K562 (cell line): ENCODE measurements at regions of chr1 and their contacts with region 1.

Region 1: DNA sequence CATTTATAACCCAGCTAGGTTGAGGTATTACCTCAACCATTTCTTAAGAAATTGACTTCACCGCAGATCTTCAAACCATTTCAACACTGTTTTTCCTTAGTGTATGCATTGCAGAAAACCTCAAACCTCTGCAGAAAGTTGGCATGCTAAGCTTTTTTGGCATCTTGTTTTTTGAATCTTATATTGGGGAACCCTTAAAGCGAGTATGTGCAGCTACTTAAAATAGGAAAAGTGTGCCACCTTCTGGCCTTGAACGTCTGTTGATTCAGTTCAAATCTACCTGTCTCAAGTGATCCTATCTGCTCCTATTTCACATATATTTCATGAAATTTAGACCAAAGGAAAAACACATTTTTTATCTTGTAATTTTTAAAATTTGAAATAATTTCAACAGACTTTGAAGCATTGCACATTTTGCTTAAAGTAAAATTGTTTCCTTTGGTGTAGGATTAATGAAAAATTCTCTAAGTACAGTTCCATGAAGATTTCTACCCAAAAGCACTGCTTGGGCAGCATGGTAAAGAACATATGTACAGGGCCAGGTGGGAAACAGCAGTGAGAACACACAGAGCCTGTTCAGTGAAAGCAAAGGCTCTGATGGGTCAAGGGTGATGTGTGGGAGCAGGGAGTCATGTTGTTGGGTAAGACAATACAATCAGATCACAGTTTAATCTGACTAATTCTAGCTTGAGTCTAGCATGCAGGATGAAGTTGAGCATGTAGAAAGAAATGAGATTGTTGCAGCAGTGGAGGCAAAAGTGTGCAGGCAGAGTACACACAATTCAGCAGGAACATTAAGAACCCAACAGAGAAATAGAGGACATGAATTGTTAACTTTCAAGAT is 17.2 kb downstream of the HENMT1 start:
- DNase-seq: peak; percentile 31 to 80 (median 46)
- ATAC-seq: peak; percentile 85
- H3K4me3 ChIP-seq: no peak overlapping the region
- H3K27ac ChIP-seq: no peak overlapping the region
- H3K4me1 ChIP-seq: peaks cover 0 to 8% of the 10 kb centered on the region in 2 experiments; a peak in 3 of 5 replicates
- H3K27me3 ChIP-seq: no peaks in the 10 kb centered on the region; a peak in 1 of 5 replicates
- CTCF ChIP-seq: peak; percentile 58 to 91 (median 70); a peak in 5 of 6 replicates
- EP300 ChIP-seq: no peak
- POLR2A ChIP-seq: no peak
- RAD21 ChIP-seq: peak; percentile 94 to 97

Region 2: DNA sequence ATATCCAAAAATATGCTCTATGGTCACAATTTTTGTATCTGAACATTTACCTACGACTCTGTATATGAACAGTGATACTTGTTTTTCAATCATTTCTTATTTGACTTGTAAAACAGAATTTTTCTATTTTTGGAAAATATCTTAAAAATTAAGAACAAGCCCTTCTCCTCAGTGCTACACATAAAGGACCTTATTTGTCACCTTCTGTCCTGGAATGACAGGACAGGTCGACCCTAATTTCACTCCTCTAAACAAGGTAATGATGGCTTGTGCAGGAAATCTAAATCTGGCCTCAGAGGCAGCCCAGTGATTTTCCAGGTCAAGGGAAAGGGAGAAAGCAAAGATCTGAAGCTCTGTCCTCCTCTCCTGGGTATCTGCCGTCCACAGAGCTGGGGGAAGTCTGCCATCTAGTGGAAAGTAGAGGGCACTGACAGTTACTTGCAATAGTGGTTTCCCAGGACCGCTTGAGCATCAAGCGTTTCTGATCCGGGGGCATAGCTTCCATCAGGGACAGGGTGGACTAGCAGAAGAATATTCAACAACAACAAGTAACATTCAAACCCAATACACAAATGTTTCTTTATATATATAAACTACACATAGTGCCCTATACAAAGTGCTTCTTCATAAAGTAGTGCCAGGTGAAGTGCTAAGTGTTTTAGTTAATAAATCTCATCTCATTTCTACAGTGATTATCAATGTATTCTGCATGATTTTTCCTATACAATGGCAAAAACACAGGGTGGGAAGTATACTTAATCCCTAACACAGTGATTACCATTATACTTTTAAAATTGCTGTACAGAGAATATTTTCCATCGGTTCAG is 518.2 kb before region 1 on chr1:
- CTCF ChIA-PET with region 1: no interaction called
- POLR2A ChIA-PET with region 1: no interaction called
- in situ Hi-C with region 1: no loop called
- intact Hi-C with region 1: loop called (anchors 10 kb)
- DNase-seq: peak; percentile 77 to 86 (median 82)
- ATAC-seq: peak; percentile 93
- H3K4me3 ChIP-seq: no peak overlapping the region
- H3K27ac ChIP-seq: no peak overlapping the region
- H3K4me1 ChIP-seq: peaks cover 0 to 6% of the 10 kb centered on the region in 2 experiments; a peak in 2 of 5 replicates
- H3K27me3 ChIP-seq: peaks cover 12 to 24% of the 10 kb centered on the region in 2 experiments
- CTCF ChIP-seq: peak; percentile 94 to 96 (median 94)
- EP300 ChIP-seq: no peak
- POLR2A ChIP-seq: no peak
- RAD21 ChIP-seq: peak; percentile 99

Region 3: GRCh38 chr1:108512239-108512981 is 131.3 kb before region 1 on chr1:
- CTCF ChIA-PET with region 1: interaction called, 65 read pairs
- POLR2A ChIA-PET with region 1: no interaction called
- in situ Hi-C with region 1: loop called (anchors 5 kb)
- intact Hi-C with region 1: loop called (anchors 1 kb)
- DNase-seq: peak; percentile 31 to 68 (median 48)
- ATAC-seq: peak; percentile 87
- H3K4me3 ChIP-seq: no peak overlapping the region
- H3K27ac ChIP-seq: no peak overlapping the region
- H3K4me1 ChIP-seq: no peaks in the 10 kb centered on the region
- H3K27me3 ChIP-seq: no peaks in the 10 kb centered on the region
- CTCF ChIP-seq: peak; percentile 77 to 99 (median 81)
- EP300 ChIP-seq: no peak
- POLR2A ChIP-seq: no peak
- RAD21 ChIP-seq: peak; percentile 100

Region 4: DNA sequence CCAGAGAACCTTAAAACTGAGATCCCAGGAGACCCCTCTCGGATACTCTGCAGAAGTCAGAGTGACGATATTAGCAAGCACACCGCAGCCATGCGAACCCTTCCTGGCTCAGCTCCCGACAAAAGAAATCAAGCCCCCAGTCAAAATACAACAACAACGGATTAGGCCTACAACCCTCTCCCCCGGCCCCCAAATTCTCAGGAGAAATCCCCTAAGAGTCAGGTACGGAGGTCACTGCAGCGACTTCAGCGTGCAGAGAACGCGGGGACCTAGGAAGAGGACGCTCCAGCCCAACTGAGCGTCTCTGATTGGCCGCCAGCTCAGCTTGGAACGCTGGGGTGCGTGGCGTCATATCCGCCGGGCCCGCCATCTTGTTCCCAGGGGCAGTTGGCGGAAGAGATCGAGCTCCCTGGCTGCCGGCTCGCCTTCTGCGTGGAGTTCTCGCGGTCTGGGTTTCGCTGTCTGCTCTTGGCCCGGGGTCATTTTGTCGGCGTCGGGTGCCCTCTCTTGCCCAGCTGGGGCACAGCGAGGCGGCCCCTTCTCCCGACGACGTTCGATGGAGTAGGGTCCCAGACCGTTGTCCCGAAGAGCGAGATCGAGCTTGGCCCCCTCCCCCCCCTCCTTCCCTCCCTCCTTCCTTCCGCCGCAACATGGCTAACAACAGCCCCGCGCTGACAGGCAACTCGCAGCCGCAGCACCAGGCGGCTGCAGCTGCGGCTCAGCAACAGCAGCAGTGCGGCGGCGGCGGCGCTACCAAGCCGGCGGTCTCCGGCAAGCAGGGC is 48.4 kb after region 1 on chr1 and contains the start of gene PRPF38B:
- CTCF ChIA-PET with region 1: no interaction called
- POLR2A ChIA-PET with region 1: interaction called, 9 read pairs
- in situ Hi-C with region 1: no loop called
- intact Hi-C with region 1: loop called (anchors 2 kb)
- DNase-seq: peak; percentile 96 to 99 (median 98)
- ATAC-seq: peak; percentile 91
- H3K4me3 ChIP-seq: peak within 1 kb of the TSS; percentile 74
- H3K27ac ChIP-seq: peak within 1 kb of the TSS; percentile 94
- H3K4me1 ChIP-seq: peaks cover 5 to 7% of the 10 kb centered on the region in 2 experiments; a peak in 3 of 5 replicates
- H3K27me3 ChIP-seq: no peaks in the 10 kb centered on the region
- CTCF ChIP-seq: no peak
- EP300 ChIP-seq: 0 out of 2 replicates have a peak, but pooled peaks have one; percentile 10
- POLR2A ChIP-seq: peak; percentile 99
- RAD21 ChIP-seq: no peak
- polyA plus RNA-seq, gene PRPF38B: 25.3 to 34.3 TPM

Region 5: GRCh38 chr1:108722292-108722691 is 78.6 kb after region 1 on chr1:
- CTCF ChIA-PET with region 1: no interaction called
- POLR2A ChIA-PET with region 1: no interaction called
- in situ Hi-C with region 1: no loop called
- intact Hi-C with region 1: no loop called
- DNase-seq: no peak
- ATAC-seq: no peak; the same call in 2 of the 3 replicates
- H3K4me3 ChIP-seq: no peak overlapping the region
- H3K27ac ChIP-seq: no peak overlapping the region
- H3K4me1 ChIP-seq: peaks cover 0 to 10% of the 10 kb centered on the region in 2 experiments; a peak in 3 of 5 replicates
- H3K27me3 ChIP-seq: peaks cover 14 to 15% of the 10 kb centered on the region in 2 experiments; a peak in 4 of 5 replicates
- CTCF ChIP-seq: no peak
- EP300 ChIP-seq: no peak
- POLR2A ChIP-seq: no peak
- RAD21 ChIP-seq: no peak

Region 6: GRCh38 chr1:108816049-108816893 is 172.6 kb after region 1 on chr1:
- CTCF ChIA-PET with region 1: no interaction called
- POLR2A ChIA-PET with region 1: no interaction called
- in situ Hi-C with region 1: no loop called
- intact Hi-C with region 1: loop called (anchors 10 kb)
- DNase-seq: peak; percentile 25 to 53 (median 35)
- ATAC-seq: peak; percentile 74
- H3K4me3 ChIP-seq: no peak overlapping the region
- H3K27ac ChIP-seq: no peak overlapping the region
- H3K4me1 ChIP-seq: peaks cover 0 to 14% of the 10 kb centered on the region in 2 experiments; a peak in 3 of 5 replicates
- H3K27me3 ChIP-seq: no peaks in the 10 kb centered on the region
- CTCF ChIP-seq: no peak
- EP300 ChIP-seq: no peak
- POLR2A ChIP-seq: no peak
- RAD21 ChIP-seq: no peak

Region 7: DNA sequence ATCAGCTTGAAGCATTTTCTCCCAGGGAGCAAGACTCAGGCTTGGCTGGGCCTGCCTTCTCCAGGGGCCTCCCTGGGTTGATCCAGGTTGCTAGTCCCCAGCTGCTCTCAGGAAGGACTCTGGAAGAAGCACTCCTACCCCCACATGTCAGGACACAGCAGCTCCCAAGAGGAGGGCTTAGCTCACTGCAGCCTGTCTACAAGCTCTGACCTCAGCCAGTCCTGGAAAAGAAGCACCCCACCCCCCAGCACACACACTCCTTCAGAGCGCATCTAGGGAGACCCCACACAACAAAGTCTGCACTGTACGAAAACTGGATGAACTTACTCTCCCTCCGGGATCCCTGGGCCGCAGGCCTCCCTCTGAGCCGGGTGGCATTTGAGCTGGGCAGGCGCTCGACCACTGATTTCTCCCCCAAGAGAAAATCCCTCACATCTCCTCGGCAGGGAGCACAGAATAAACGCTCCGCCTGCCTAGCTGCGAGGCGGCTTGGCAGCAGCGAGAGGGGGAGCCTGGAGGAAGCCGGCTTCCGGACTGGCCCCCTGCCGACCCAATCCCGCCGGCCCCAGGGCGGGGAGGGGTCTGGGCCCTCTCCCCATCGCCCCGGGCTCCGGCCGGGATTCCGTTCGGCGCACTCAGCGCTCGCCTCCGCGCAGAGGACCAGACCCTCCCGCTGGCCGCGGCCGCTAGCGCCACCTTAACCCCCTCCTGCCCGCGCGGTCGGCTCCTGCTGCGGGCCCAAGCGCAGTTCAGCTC is 1962.4 kb after region 1 on chr1 and contains the start of gene KCNA2:
- CTCF ChIA-PET with region 1: no interaction called
- POLR2A ChIA-PET with region 1: no interaction called
- in situ Hi-C with region 1: no loop called
- intact Hi-C with region 1: no loop called
- DNase-seq: no peak
- ATAC-seq: peak; percentile 36; the same call in 1 of the 3 replicates
- H3K4me3 ChIP-seq: no peak within 1 kb of the TSS
- H3K27ac ChIP-seq: no peak within 1 kb of the TSS
- H3K4me1 ChIP-seq: peaks cover 0 to 12% of the 10 kb centered on the region in 2 experiments; a peak in 1 of 5 replicates
- H3K27me3 ChIP-seq: peaks cover 67 to 74% of the 10 kb centered on the region in 2 experiments
- CTCF ChIP-seq: no peak
- EP300 ChIP-seq: no peak
- POLR2A ChIP-seq: no peak
- RAD21 ChIP-seq: no peak
- polyA plus RNA-seq, gene KCNA2: not detected